Activated T-helper 2 cell treated with anti-CD3 and anti-CD28 coated beads, Interferon-gamma antibody, Interleukin-2, Interleukin-4, amounts not matched to agents 10 μg/mL and 5 μg/mL and 100 μg/mL, durations not matched to agents 14 hours and 24 hours and 36 hours (primary cell): ENCODE measurements at regions of chr14 and their contacts with region 1.

Region 1: GRCh38 chr14:51908086-51908485 is 47.7 kb downstream of the GNG2 start:
- DNase-seq: no peak
- H3K4me3 Mint-ChIP-seq: no peak overlapping the region
- H3K27ac Mint-ChIP-seq: peak overlapping the region; percentile 28
- H3K4me1 Mint-ChIP-seq: peaks cover 23% of the 10 kb centered on the region
- H3K27me3 Mint-ChIP-seq: no peaks in the 10 kb centered on the region

Region 2: DNA sequence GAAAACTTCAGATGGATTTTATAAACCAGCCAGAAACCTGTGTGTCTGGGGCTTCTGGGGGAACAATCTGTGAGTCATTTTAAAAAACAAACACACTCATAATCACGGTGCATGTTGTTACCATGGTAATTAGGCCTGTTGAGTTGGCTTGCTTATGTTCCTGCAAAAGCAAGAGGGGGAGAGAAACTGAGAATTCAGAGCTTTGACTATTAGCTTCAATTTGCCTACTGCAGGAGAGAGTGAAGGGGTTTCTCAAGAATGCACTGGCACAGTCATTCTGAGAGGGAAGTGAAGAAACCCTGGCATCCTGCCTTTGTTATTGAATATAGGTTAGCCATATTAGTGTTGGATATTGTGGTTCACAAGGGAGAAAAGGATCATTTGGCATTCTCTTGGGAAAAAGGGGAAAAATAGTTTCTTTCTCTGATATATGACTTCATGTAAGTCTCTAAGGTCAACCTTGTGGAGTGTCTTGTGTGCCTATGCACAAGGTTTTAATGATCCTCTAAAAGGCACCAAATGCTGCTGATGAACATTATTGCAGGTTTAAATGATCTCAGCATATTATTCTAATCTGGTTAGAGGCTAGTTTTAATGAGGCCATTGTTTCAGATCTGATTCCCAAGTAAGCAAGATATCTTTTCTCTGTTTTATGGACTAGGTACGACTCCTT is 34.7 kb before region 1 on chr14:
- intact Hi-C with region 1: loop called (anchors 1 kb)
- DNase-seq: no peak
- H3K4me3 Mint-ChIP-seq: peak overlapping the region; percentile 22
- H3K27ac Mint-ChIP-seq: peak overlapping the region; percentile 85
- H3K4me1 Mint-ChIP-seq: peaks cover 54% of the 10 kb centered on the region
- H3K27me3 Mint-ChIP-seq: no peaks in the 10 kb centered on the region

Region 3: GRCh38 chr14:51929906-51930682 is 22.0 kb after region 1 on chr14:
- intact Hi-C with region 1: loop called (anchors 2 kb)
- DNase-seq: no peak
- H3K4me3 Mint-ChIP-seq: no peak overlapping the region
- H3K27ac Mint-ChIP-seq: peak overlapping the region; percentile 83
- H3K4me1 Mint-ChIP-seq: peaks cover 32% of the 10 kb centered on the region
- H3K27me3 Mint-ChIP-seq: no peaks in the 10 kb centered on the region